ENCODE measurements at regions of chr10 and their contacts with region 1.

Region 1: DNA sequence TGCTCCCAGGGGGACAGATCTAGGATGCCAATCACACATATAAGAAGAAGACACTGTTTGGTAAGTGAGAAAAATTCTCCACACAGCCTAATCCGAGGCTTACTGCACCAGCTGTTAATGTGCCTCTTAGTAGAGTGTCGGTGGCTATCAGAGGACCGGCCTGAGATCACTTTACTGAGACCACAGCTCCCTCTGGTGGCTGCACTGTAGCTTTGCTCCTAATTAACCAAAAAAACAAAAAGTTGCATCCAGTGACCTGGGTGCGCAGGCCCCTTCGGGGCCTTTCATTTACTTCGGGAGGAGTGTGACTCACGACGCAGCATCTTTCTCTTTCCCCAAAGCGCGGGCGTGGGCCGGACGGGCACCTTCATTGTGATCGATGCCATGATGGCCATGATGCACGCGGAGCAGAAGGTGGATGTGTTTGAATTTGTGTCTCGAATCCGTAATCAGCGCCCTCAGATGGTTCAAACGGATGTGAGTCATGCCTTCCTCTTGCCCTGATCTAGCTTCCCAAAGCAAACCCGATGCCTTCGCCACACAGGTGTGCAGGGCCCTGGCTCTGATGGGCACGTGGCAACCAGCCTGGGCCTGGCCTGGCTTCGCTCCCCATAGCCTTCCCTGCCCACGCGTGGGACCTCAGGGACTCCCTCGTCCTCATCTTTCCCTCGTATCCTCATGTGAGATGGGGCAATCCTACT is 56.7 kb downstream of the MKI67 start:
- DNase-seq: peak; percentile 74 to 80 (median 78)
- H3K4me3 ChIP-seq: no peak overlapping the region
- H3K4me3 Mint-ChIP-seq: peak overlapping the region in 2 of 8 donors; percentile 13 to 61
- H3K27ac ChIP-seq: no peak overlapping the region
- H3K27ac Mint-ChIP-seq: peak overlapping the region in 5 of 7 donors; percentile 55 to 82 (median 74)
- H3K4me1 ChIP-seq: peaks cover 29% of the 10 kb centered on the region
- H3K4me1 Mint-ChIP-seq: peaks cover 39 to 54% (median 47%) of the 10 kb centered on the region in 4 donors
- H3K27me3 ChIP-seq: no peaks in the 10 kb centered on the region
- H3K27me3 Mint-ChIP-seq: no peaks in the 10 kb centered on the region

Region 2: DNA sequence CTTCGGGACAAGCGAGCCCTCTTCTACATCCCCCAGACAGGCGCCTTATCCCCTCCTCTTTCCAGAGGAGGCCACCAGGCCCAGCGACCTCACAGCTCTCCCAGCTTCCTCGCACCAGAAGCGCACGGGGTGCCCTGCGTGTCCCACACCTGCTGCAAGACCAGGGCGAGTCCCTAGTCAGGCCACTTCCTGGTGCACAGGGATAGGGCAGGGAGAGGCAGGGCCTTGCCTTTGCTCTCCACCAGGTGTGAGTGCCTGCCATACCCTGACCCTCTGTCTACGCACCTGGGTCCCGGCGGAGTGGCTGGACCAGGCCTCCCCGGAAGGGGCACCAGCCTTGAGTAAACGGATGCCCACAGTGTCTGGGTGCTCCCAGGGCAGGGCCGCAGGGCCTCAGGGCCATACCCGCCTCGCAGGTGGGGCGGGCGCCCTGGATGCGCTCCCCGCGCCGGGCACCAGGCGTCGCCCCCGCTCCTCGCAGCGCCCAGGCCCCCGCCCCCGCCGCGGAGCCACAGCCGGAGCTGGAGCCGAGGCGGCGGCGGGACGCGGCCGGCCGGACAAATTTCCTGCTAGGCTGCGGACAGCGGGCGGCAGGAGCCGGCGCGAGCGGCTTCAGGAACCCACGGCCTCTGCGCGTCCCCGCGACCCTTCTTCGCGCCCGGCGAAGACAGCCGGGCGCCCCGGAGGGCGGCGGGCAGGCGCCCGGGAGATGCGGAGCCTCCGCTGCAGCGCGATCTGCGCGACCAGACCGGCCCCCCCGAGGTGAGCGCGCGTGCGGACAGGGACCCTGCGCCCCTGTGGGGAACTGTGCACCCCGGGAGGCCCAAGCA is 162.7 kb before region 1 on chr10 and contains the start of gene PTPRE:
- CTCF ChIA-PET with region 1: interaction called, 49 read pairs
- POLR2A ChIA-PET with region 1: interaction called, 4 read pairs
- intact Hi-C with region 1: loop called (anchors 1 kb)
- DNase-seq: peak in 4 of 5 donors; percentile 59 to 67 (median 66)
- H3K4me3 ChIP-seq: no peak within 1 kb of the TSS
- H3K4me3 Mint-ChIP-seq: peak within 1 kb of the TSS in 7 of 8 donors; percentile 33 to 68 (median 42)
- H3K27ac ChIP-seq: no peak within 1 kb of the TSS
- H3K27ac Mint-ChIP-seq: no peak within 1 kb of the TSS
- H3K4me1 ChIP-seq: no peaks in the 10 kb centered on the region
- H3K4me1 Mint-ChIP-seq: no peaks in the 10 kb centered on the region
- H3K27me3 ChIP-seq: peaks cover 5% of the 10 kb centered on the region
- H3K27me3 Mint-ChIP-seq: peaks cover 21 to 34% of the 10 kb centered on the region in 2 donors
- total RNA-seq, gene PTPRE: 24.4 to 27.6 TPM

Region 3: DNA sequence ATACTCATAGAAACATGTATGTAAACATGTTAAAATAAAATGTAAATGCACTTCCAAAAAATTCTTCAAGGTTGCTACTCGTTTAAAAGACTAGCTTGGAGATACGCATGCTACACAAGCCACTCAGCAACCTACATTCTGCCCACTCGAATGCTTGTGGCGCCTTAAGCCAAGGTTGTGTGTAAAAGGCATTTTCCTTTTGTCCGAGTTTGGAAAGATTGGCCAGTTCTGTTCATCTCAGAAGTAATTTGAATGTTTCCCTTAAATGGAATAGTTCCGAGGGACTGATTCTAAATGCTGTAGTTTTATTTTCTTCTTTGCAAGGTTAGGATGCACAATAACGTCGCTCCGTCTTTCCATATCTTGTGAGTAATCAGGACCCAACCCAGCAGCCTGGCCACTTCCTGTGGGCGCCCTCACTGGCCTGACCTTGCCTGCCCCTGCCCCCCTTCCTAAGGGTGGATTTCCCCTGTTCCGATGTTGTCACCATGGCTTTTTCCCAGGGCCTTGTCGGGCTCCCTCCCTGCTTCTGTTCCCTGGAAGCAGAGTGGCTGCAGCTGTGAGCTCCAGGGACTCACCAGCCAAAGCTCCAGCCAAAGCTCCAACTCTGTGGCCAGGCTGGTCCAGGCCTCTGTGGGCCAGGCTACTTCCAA is 92.0 kb before region 1 on chr10:
- CTCF ChIA-PET with region 1: no interaction called
- POLR2A ChIA-PET with region 1: no interaction called
- intact Hi-C with region 1: no loop called
- DNase-seq: no peak
- H3K4me3 ChIP-seq: no peak overlapping the region
- H3K4me3 Mint-ChIP-seq: peak overlapping the region in 2 of 8 donors; percentile 17 to 20
- H3K27ac ChIP-seq: no peak overlapping the region
- H3K27ac Mint-ChIP-seq: no peak overlapping the region
- H3K4me1 ChIP-seq: no peaks in the 10 kb centered on the region
- H3K4me1 Mint-ChIP-seq: peaks cover 0 to 7% (median under 1%) of the 10 kb centered on the region in 4 donors
- H3K27me3 ChIP-seq: no peaks in the 10 kb centered on the region
- H3K27me3 Mint-ChIP-seq: peaks cover 10 to 28% of the 10 kb centered on the region in 2 donors

Region 4: DNA sequence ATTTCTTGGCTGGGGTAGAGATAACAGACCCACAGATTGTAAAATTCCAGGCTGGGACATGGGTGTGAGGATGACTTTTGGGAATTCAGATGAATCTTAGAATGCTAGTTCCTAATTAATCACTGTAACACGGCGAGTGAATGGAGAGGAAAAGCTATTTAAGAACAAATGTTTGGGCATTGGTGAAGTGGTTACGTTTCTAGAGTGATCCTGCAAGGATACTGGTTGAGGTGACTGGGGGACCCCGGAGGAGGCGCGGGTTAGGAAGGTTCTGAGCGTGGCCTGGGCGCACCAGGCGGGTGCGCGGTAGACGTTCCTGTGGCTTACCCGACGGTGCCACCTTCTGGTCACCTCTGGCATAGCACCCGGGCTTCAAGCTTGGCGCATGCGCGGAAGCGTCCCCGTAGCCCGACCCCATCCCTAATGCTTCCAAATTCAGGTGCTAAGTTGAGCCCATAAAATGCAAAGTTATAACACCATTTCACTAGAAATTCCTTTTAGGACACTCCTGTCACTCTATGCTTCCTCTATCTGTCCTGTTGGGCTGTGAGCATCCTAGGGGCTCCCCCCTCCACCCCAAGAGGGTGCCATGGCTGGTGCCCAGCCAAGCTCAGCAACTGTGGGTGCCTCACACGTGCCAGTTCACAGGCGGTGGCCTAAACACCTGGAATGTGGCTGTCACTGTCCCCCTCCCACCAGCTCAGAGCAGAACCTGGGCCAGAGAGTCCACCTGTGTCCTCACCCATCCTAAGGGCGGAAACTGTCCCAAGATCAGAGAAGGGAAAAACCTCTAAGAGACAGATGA is 58.1 kb before region 1 on chr10:
- CTCF ChIA-PET with region 1: interaction called, 25 read pairs
- POLR2A ChIA-PET with region 1: interaction called, 4 read pairs
- intact Hi-C with region 1: loop called (anchors 1 kb)
- DNase-seq: peak; percentile 77 to 89 (median 83)
- H3K4me3 ChIP-seq: no peak overlapping the region
- H3K4me3 Mint-ChIP-seq: peak overlapping the region in 5 of 8 donors; percentile 14 to 50 (median 20)
- H3K27ac ChIP-seq: no peak overlapping the region
- H3K27ac Mint-ChIP-seq: peak overlapping the region in 5 of 7 donors; percentile 10 to 83 (median 62)
- H3K4me1 ChIP-seq: peaks cover 3% of the 10 kb centered on the region
- H3K4me1 Mint-ChIP-seq: peaks cover 6 to 9% (median 7%) of the 10 kb centered on the region in 4 donors
- H3K27me3 ChIP-seq: no peaks in the 10 kb centered on the region
- H3K27me3 Mint-ChIP-seq: peaks cover 2 to 12% of the 10 kb centered on the region in 2 donors

Region 5: DNA sequence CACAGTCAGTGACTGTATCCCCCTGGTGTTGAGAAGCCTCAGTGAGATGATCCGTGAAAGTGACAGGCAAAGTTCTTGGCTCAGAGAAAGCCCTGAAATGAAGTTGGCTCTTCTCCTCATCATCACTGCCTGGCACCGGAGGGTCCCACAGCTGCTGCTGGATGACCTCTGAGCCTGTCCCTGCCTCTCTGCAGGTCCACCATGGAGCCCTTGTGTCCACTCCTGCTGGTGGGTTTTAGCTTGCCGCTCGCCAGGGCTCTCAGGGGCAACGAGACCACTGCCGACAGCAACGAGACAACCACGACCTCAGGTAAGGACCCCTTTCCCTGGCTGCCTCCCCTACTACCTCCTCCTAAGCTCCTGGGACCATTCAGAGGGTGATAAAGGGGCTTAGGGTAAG is 28.8 kb before region 1 on chr10:
- CTCF ChIA-PET with region 1: interaction called, 509 read pairs
- POLR2A ChIA-PET with region 1: interaction called, 169 read pairs
- intact Hi-C with region 1: loop called (anchors 1 kb)
- DNase-seq: no peak
- H3K4me3 ChIP-seq: no peak overlapping the region
- H3K4me3 Mint-ChIP-seq: no peak overlapping the region
- H3K27ac ChIP-seq: no peak overlapping the region
- H3K27ac Mint-ChIP-seq: no peak overlapping the region
- H3K4me1 ChIP-seq: peaks cover 3% of the 10 kb centered on the region
- H3K4me1 Mint-ChIP-seq: peaks cover 0 to 7% (median 3%) of the 10 kb centered on the region in 4 donors
- H3K27me3 ChIP-seq: no peaks in the 10 kb centered on the region
- H3K27me3 Mint-ChIP-seq: no peaks in the 10 kb centered on the region

Region 6: GRCh38 chr10:128125944-128126764 is 56.7 kb after region 1 on chr10 and contains the start of gene MKI67:
- CTCF ChIA-PET with region 1: no interaction called
- POLR2A ChIA-PET with region 1: no interaction called
- intact Hi-C with region 1: loop called (anchors 10 kb)
- DNase-seq: peak; percentile 87 to 92 (median 88)
- H3K4me3 ChIP-seq: peak within 1 kb of the TSS; percentile 70 to 71
- H3K4me3 Mint-ChIP-seq: peak within 1 kb of the TSS; percentile 90 to 96 (median 93)
- H3K27ac ChIP-seq: peak within 1 kb of the TSS; percentile 72
- H3K27ac Mint-ChIP-seq: peak within 1 kb of the TSS; percentile 71 to 95 (median 90)
- H3K4me1 ChIP-seq: peaks cover 42% of the 10 kb centered on the region
- H3K4me1 Mint-ChIP-seq: peaks cover 11 to 37% (median 30%) of the 10 kb centered on the region in 4 donors
- H3K27me3 ChIP-seq: peaks cover 12% of the 10 kb centered on the region
- H3K27me3 Mint-ChIP-seq: peaks cover 6 to 20% of the 10 kb centered on the region in 2 donors
- total RNA-seq, gene MKI67: 0.17 to 0.93 TPM

Region 7: GRCh38 chr10:128230401-128230800 is 160.9 kb after region 1 on chr10:
- CTCF ChIA-PET with region 1: no interaction called
- POLR2A ChIA-PET with region 1: no interaction called
- intact Hi-C with region 1: no loop called
- DNase-seq: no peak
- H3K4me3 ChIP-seq: no peak overlapping the region
- H3K4me3 Mint-ChIP-seq: no peak overlapping the region
- H3K27ac ChIP-seq: no peak overlapping the region
- H3K27ac Mint-ChIP-seq: no peak overlapping the region
- H3K4me1 ChIP-seq: no peaks in the 10 kb centered on the region
- H3K4me1 Mint-ChIP-seq: no peaks in the 10 kb centered on the region
- H3K27me3 ChIP-seq: no peaks in the 10 kb centered on the region
- H3K27me3 Mint-ChIP-seq: peaks cover 3 to 7% of the 10 kb centered on the region in 2 donors

Measured in CD4-positive, alpha-beta memory T cell (primary cell).